A549 (cell line): ENCODE measurements at regions of chr14 and their contacts with region 1.

Region 1: DNA sequence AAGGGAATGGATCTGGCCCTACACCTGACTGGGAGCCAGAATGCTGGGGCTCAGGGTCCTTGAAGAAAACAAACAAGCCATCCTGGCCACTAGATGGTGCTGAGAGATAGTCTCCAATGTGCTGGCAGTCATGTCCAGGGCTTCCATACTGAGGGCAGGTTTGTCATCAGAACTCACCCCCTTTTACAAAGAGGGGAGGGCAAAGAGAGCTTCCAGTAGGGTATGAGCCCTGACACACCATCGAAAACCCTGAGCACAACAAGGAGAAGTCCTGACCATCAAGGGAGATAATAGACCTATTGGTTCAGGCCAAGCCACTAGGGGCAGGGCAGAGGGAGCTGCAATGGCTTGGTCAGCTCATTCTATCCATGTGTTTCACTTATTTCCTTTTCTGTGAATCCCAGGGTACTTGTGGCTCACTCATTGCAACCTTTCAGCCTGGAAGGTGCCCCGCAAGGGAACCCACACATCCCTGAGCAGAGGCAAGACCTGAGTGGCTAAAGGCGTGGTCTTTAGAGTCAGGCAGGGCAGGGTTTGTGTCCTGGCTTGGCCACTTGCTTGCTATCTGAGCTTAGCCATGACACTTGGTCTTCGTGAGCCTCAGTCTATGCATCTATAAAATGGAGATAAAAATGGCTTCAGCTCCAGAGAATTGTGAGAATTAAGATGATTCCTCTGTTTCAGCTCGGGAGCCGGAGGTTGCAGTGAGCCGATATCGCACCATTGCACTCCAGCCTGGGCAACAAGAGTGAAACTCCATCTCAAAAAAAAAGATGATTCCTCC is 6.2 kb upstream of the PLEKHH1 start:
- DNase-seq: peak; percentile 54 to 71
- ATAC-seq: peak; percentile 91 to 96
- H3K4me3 ChIP-seq: no peak overlapping the region
- H3K27ac ChIP-seq: no peak overlapping the region
- H3K4me1 ChIP-seq: no peaks in the 10 kb centered on the region
- CTCF ChIP-seq: peak; percentile 95
- EP300 ChIP-seq: no peak
- POLR2A ChIP-seq: no peak
- RAD21 ChIP-seq: peak; percentile 79 to 84

Region 2: DNA sequence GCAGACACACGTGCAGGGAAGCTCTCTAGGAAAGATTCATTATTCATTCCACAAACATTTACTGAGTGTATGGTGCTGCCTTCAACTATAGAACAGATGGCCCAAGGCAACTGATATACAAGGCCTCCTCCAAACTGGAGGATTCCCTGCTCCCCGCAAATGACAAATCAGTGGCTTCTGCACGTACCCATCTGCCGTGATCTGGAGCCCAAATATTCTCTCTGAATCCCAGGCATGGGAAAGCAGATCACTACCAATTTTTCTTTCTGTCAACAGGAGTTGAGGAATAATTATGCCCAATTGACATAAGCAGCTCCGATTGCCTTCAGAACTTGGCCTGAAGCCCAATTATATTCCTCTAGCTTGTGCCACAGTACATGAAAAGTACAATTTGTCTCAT is 1214.9 kb before region 1 on chr14:
- CTCF ChIA-PET with region 1: no interaction called
- POLR2A ChIA-PET with region 1: no interaction called
- DNase-seq: no peak
- ATAC-seq: no peak
- H3K4me3 ChIP-seq: no peak overlapping the region
- H3K27ac ChIP-seq: no peak overlapping the region
- H3K4me1 ChIP-seq: no peaks in the 10 kb centered on the region
- CTCF ChIP-seq: no peak
- EP300 ChIP-seq: no peak
- POLR2A ChIP-seq: no peak
- RAD21 ChIP-seq: no peak

Region 3: DNA sequence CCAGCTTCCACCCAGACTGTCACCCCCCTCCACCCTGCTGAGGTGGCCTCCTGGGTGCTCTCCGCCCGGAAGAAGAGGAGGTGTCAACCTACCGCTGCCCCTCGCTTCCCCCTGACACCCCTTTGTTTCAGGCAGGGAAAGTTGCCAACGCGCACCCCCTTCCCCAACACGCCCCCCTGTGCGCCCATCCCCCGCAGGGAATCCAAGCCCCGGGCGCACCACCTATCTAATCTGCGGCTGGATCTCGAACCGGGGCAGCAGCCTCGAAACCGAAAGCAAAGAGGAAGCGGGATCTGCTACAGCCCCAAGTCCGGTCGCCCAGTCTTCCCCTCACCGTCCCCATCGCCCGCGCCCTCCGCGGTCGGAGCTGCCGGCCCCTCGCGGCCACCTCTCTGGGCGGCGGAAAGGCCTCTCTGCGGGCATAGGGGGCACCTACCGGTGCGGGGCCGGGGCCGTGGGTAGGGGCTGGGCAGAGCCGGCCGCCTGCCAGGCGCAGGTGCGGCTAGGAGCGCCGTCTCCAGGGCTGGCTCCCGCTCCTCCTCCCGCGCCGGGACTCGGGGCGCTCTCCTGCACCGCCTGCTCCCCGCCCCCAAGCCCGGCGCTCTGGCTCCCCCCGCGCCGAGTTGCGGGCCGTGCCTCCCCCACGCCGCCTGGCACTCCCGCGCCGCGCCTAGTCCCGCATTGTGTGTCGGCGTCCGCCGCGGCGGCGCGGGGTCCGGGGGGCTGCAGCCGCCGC is 12.1 kb before region 1 on chr14:
- CTCF ChIA-PET with region 1: interaction called, 73 read pairs
- POLR2A ChIA-PET with region 1: no interaction called
- DNase-seq: peak in 1 of 2 experiments; percentile 45
- ATAC-seq: peak; percentile 54 to 65; a peak in 5 of 6 replicates
- H3K4me3 ChIP-seq: peak overlapping the region; percentile 78
- H3K27ac ChIP-seq: peak overlapping the region; percentile 63 to 88
- H3K4me1 ChIP-seq: no peaks in the 10 kb centered on the region
- CTCF ChIP-seq: no peak
- EP300 ChIP-seq: no peak
- POLR2A ChIP-seq: no peak
- RAD21 ChIP-seq: no peak

Region 4: GRCh38 chr14:67551940-67552339 is 25.1 kb after region 1 on chr14:
- CTCF ChIA-PET with region 1: interaction called, 20 read pairs
- POLR2A ChIA-PET with region 1: no interaction called
- DNase-seq: no peak
- ATAC-seq: no peak
- H3K4me3 ChIP-seq: no peak overlapping the region
- H3K27ac ChIP-seq: no peak overlapping the region
- H3K4me1 ChIP-seq: peaks cover 3% of the 10 kb centered on the region; the same call in 1 of the 3 replicates
- CTCF ChIP-seq: no peak
- EP300 ChIP-seq: no peak
- POLR2A ChIP-seq: no peak
- RAD21 ChIP-seq: no peak

Region 5: GRCh38 chr14:67564236-67564635 is 37.4 kb after region 1 on chr14:
- CTCF ChIA-PET with region 1: interaction called, 100 read pairs
- POLR2A ChIA-PET with region 1: no interaction called
- DNase-seq: no peak
- ATAC-seq: no peak
- H3K4me3 ChIP-seq: no peak overlapping the region
- H3K27ac ChIP-seq: no peak overlapping the region
- H3K4me1 ChIP-seq: no peaks in the 10 kb centered on the region
- CTCF ChIP-seq: no peak
- EP300 ChIP-seq: no peak
- POLR2A ChIP-seq: no peak
- RAD21 ChIP-seq: no peak

Region 6: GRCh38 chr14:67695394-67695949 is 168.6 kb after region 1 on chr14 and contains the start of gene RDH11:
- CTCF ChIA-PET with region 1: interaction called, 10 read pairs
- POLR2A ChIA-PET with region 1: no interaction called
- DNase-seq: peak; percentile 89 to 94
- ATAC-seq: peak; percentile 98 to 99
- H3K4me3 ChIP-seq: peak within 1 kb of the TSS; percentile 96
- H3K27ac ChIP-seq: peak within 1 kb of the TSS; percentile 89 to 93
- H3K4me1 ChIP-seq: peaks cover 21% of the 10 kb centered on the region
- CTCF ChIP-seq: no peak
- EP300 ChIP-seq: no peak
- POLR2A ChIP-seq: peak; percentile 94
- RAD21 ChIP-seq: no peak
- polyA plus RNA-seq, gene RDH11: 132 and 146 TPM in 2 replicates